Activated CD8-positive, alpha-beta T cell treated with anti-CD3 and anti-CD28 coated beads for 36 hours (primary cell): ENCODE measurements at regions of chr17 and their contacts with region 1.

Region 1: DNA sequence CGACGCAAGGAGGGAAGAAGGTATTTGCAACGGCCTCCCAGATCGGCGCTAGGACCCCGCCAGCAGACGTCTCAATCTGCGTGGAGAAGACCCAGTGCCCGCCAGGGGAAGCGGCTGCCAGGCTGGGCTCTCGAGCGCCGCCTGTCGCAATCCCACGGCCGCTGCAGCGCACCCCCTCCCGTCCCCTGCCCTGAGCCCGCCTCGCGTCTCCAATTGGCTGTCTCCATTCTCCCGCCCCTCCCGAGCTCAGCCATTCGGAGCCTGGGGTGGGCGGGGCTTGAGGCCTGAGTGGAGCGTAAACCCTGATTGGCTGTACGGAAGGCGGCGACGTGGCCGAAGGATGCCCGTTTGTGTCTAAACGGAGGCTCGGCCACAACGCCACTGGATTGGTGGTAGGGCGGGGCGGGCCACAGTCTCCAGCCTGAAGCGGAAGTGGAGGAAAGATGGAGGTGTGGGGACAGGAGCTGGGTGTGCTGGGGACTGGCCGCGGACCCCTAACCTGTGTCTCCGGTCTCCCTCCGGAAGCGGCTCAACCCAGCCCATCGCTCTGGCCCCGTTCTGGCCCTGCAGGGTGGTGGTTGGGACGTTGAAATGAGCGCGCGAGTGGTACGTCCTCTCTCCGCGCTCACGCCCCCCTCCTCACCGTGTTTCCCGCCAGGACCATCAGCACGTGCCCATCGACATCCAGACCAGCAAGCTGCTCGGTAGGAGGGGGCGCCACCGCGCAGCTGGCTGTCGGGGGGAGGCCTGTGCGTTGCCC is at the start of gene CDK5RAP3:
- DNase-seq: peak; percentile 100
- ATAC-seq: peak; percentile 100
- H3K4me3 Mint-ChIP-seq: peak within 1 kb of the TSS; percentile 95
- H3K27ac Mint-ChIP-seq: peak within 1 kb of the TSS; percentile 91
- H3K4me1 Mint-ChIP-seq: peaks cover 22% of the 10 kb centered on the region
- H3K27me3 Mint-ChIP-seq: no peaks in the 10 kb centered on the region
- CTCF ChIP-seq: peak; percentile 97
- total RNA-seq, gene CDK5RAP3: 161 to 171 TPM

Region 2: DNA sequence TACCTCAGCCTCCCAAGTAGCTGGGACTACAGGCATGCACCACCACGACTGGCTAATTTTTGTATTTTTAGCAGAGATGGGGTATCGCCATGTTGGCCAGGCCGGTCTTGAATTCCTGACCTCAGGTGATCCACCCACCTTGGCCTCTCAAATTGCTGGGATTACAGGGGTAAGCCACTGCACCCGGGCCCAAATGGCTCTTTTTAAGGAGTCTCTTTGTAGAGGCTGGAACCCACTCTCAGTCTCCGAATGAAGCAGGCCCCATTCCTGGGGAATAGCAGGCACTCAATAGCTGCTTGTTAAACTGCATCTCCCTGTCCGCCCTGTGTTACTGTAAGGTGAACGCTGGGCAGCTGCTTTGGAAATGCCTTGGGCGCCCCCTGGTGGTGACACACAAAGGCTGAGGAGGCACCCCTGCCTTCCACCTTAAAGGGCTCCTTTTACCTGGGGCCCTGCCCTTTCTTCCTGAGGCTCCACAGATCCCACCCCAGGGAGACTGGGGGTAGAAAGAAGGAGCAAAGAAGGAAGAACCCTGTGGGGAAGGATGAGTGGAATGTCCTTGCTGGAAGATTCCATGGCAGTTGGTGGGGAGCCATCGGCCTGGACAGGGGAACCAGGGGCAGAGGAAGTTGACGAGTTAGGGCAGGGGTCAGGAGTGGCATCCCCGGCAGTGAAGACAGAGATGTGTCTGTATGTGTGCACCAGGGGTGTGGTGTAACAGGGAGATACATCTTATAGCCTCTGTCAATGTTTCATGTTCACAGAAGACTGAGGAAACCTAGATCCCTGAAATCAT is 81.0 kb before region 1 on chr17:
- CTCF ChIA-PET with region 1: interaction called, 20 read pairs
- POLR2A ChIA-PET with region 1: interaction called, 12 read pairs
- intact Hi-C with region 1: no loop called
- DNase-seq: peak; percentile 96
- ATAC-seq: peak; percentile 98
- H3K4me3 Mint-ChIP-seq: no peak overlapping the region
- H3K27ac Mint-ChIP-seq: no peak overlapping the region
- H3K4me1 Mint-ChIP-seq: peaks cover 30% of the 10 kb centered on the region
- H3K27me3 Mint-ChIP-seq: no peaks in the 10 kb centered on the region
- CTCF ChIP-seq: peak; percentile 95

Region 3: GRCh38 chr17:47941236-47941994 is 29.5 kb before region 1 on chr17 and contains the start of gene PNPO:
- CTCF ChIA-PET with region 1: interaction called, 284 read pairs
- POLR2A ChIA-PET with region 1: interaction called, 35 read pairs
- intact Hi-C with region 1: no loop called
- DNase-seq: peak; percentile 100
- ATAC-seq: peak; percentile 98
- H3K4me3 Mint-ChIP-seq: peak within 1 kb of the TSS; percentile 84
- H3K27ac Mint-ChIP-seq: peak within 1 kb of the TSS; percentile 88
- H3K4me1 Mint-ChIP-seq: peaks cover 51% of the 10 kb centered on the region
- H3K27me3 Mint-ChIP-seq: no peaks in the 10 kb centered on the region
- CTCF ChIP-seq: no peak
- total RNA-seq, gene PNPO: 41.0 to 42.7 TPM

Region 4: GRCh38 chr17:47957591-47958428 is 13.1 kb before region 1 on chr17 and contains the start of gene PRR15L:
- CTCF ChIA-PET with region 1: interaction called, 284 read pairs
- POLR2A ChIA-PET with region 1: interaction called, 7 read pairs
- intact Hi-C with region 1: no loop called
- DNase-seq: no peak
- ATAC-seq: no peak
- H3K4me3 Mint-ChIP-seq: no peak within 1 kb of the TSS
- H3K27ac Mint-ChIP-seq: no peak within 1 kb of the TSS
- H3K4me1 Mint-ChIP-seq: no peaks in the 10 kb centered on the region
- H3K27me3 Mint-ChIP-seq: no peaks in the 10 kb centered on the region
- CTCF ChIP-seq: no peak
- total RNA-seq, gene PRR15L: not detected

Region 5: DNA sequence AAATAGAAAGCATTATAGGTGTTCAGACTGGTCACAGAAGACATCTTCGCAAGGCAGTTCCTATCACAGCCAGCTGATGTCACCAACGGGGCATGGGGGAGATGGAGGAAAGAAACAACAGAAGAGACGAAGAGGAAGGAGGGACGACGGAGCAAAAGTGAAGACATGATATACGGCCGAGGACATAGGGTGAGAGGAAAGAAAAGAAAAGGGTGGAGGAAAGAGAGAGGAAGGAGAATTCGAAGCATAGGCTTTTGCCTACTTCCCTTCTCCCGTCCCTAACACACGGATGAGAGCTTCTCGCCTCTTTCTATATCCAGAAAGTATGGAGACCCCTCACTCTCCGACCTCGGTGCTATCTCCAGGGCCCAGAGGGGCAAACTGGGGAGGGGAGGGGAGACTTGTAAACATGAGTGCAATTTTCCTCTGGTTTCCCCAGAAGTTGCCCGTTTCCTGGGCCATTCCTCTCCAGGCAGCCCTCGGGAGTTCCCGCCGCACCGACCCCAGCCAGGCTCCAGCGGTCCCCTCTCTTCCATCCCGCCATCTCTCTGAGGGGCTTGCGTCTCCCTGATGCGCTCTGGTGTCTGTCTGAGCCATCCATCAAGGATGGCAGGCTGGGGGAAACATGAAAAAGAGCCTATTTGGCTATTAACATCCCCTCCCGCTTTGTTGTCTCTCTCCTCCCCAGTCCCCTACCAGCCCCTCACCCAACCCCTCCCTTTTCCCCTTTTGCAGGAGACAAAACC is 40.7 kb after region 1 on chr17:
- CTCF ChIA-PET with region 1: interaction called, 19 read pairs
- POLR2A ChIA-PET with region 1: interaction called, 5 read pairs
- intact Hi-C with region 1: no loop called
- DNase-seq: peak; percentile 68
- ATAC-seq: peak; percentile 88
- H3K4me3 Mint-ChIP-seq: peak overlapping the region; percentile 55
- H3K27ac Mint-ChIP-seq: no peak overlapping the region
- H3K4me1 Mint-ChIP-seq: peaks cover 12% of the 10 kb centered on the region
- H3K27me3 Mint-ChIP-seq: peaks cover 48% of the 10 kb centered on the region
- CTCF ChIP-seq: peak; percentile 62